ENCODE measurements at regions of chr6 and their contacts with region 1.

Region 1: GRCh38 chr6:52410991-52411390 is 9.2 kb upstream of the EFHC1 start:
- DNase-seq: no peak
- ATAC-seq: no peak
- H3K4me3 ChIP-seq: no peak overlapping the region
- H3K27ac ChIP-seq: no peak overlapping the region
- H3K4me1 ChIP-seq: no peaks in the 10 kb centered on the region
- H3K27me3 ChIP-seq: no peaks in the 10 kb centered on the region

Region 2: DNA sequence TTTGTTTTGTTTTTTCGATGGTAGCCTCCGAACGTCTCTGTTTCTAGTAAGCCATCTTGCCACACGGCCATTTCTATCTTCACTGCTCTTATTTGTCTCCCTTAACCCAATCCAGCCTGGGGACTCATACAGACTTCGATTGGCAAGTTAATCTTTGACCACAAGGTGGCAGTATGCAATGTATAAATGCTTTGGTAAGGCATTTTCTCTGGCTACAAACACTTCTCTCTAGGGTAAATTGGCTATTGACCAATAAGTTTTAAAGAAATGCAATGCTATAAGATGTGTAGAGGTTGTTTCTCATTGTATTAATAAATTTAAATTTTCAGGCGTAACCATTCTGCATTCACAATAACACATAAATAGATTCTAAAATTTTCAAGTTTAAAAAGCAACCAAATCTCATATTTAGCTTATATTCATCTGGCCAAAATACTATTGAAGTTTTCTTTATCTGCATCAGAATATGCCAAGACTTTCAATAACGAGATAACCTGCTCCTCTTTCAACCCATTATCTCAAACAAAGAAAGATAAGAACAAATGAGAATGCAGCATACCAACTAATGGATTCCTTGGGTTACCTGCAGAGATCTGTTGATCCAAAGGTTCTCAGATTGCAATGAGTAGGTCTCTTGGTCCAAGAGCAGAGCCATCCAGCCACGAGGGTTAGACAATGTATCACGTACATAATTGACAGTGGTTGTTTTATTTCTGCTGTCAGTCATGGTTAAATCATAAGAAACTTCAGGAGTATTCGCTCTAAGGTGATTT is 555.5 kb before region 1 on chr6:
- intact Hi-C with region 1: no loop called
- DNase-seq: no peak
- ATAC-seq: no peak
- H3K4me3 ChIP-seq: no peak overlapping the region
- H3K27ac ChIP-seq: no peak overlapping the region
- H3K4me1 ChIP-seq: no peaks in the 10 kb centered on the region
- H3K27me3 ChIP-seq: no peaks in the 10 kb centered on the region

Region 3: DNA sequence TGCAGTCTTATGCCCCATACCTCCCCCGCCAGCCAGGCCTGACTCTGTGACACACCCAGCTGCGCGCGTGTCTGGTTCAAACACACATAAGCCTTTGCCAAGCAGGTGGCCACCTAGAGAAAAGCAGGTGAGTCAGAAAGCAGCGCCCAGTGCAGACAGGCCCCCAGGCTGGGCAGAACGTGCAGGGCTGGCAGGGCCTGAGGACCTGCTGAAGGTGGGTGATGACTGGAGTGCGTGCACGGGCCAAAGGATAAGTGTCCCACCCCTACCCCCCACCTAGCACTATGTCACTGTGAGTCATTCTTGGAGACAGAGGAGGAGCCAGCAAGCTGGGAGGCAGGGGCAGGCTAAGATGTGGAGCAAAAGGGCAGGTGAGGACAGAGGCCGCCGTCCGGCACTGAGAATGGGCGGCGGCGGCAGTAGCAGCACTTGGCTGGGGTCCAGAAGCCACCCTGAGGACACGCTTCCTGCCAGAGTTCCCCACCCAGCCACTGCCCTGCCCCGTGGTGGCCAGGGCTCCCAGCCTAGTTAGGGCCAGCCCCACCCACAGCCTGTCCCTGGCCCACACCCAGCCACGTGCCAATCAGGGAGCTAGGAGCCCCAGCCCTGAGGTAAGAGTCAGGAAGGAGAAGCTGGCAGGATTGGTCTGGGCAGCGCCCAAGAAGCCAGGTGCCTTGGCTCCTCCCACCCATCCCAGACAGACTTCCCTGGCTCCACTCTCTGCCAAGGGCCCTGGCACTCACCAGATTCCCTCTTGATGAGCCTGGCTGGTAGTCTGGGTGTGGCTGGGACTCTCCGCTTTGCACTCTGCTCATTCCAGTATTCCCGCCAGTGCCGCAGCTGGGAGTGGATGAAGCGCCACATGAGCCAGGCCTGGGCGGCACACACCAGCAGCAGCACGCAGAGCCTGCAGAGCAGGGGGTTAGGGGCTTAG is 93.1 kb after region 1 on chr6:
- intact Hi-C with region 1: no loop called
- DNase-seq: peak; percentile 92 to 94 (median 94)
- ATAC-seq: peak; percentile 89 to 93
- H3K4me3 ChIP-seq: no peak overlapping the region
- H3K27ac ChIP-seq: peak overlapping the region; percentile 58
- H3K4me1 ChIP-seq: peaks cover 13% of the 10 kb centered on the region
- H3K27me3 ChIP-seq: no peaks in the 10 kb centered on the region

Region 4: DNA sequence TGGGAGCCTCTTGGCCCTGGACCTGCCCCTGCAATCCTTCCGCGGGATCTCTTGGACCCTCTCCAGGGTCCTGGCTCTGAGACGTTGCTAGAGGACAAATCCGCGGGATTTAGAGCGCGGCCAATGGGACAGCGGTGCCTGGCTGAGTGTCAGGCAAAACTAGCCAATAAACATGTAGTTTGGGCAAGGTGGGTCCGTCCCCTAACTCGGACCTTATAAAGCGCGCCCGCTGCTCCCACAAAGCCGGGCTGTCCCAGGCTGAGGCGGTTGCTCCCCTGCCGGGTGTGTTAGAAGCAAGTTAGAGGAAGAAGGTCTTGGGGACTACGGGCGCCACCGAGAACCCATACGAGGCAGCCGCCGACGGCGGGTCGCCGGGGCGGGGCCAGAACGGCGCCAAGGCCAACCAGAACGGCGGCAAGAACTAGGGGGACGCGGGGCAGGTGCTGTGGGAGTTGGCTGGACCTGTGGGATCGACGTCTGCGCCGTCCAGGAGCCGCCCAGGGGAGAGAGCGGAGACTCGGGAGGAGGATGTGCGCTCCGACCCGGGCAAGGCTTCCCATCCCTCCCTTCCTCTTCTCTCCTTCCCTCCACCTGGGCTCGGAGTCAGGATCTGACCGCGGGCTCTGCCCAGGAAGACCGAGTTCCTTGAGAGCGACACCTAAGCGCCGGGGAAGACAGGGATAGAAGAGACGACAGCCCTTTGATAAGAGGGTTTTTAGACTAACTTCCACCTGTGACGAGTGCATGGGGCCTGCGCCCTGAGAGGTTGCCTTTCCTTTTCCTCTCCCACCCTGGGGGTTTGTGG is 253.4 kb after region 1 on chr6:
- intact Hi-C with region 1: loop called (anchors 2 to 5 kb)
- DNase-seq: peak; percentile 89 to 96 (median 94)
- ATAC-seq: peak; percentile 99
- H3K4me3 ChIP-seq: peak overlapping the region; percentile 87
- H3K27ac ChIP-seq: peak overlapping the region; percentile 71
- H3K4me1 ChIP-seq: peaks cover 8% of the 10 kb centered on the region
- H3K27me3 ChIP-seq: no peaks in the 10 kb centered on the region

Region 5: GRCh38 chr6:52922161-52922560 is 511.2 kb after region 1 on chr6:
- intact Hi-C with region 1: no loop called
- DNase-seq: no peak
- ATAC-seq: no peak
- H3K4me3 ChIP-seq: no peak overlapping the region
- H3K27ac ChIP-seq: no peak overlapping the region
- H3K4me1 ChIP-seq: no peaks in the 10 kb centered on the region
- H3K27me3 ChIP-seq: peaks cover 2% of the 10 kb centered on the region